GM13976 (cell line): ENCODE measurements at regions of chr17 and their contacts with region 1.

Region 1: DNA sequence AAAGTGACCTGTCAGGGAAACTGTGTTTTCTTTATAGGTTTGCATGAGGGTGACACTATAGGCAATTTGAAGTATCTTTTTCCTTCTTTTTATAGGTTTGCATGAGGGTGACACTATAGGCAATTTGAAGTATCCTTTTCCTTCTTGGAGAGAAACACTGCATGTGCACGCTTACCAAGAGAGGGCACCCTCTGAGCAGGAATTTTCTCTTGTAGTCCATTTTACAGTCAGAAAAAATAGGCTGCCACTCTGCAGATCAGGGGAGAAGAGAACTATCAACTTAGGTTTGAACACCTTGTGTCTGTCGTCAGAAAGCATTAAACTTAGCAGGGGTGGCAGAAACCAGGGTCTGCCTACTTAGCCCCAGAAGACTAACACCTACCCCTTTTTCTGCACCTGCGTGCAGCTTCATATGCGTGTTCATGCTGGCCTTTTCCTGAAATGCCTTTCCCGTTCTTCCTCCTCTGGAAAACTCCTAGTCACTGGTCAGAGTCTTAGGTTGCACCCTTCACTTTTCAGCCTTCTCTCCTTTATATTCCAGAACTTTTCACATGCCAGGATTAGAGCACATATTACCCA is 16.4 kb upstream of the SMIM36 start:
- DNase-seq: peak; percentile 29
- CTCF ChIP-seq: peak; percentile 41

Region 2: DNA sequence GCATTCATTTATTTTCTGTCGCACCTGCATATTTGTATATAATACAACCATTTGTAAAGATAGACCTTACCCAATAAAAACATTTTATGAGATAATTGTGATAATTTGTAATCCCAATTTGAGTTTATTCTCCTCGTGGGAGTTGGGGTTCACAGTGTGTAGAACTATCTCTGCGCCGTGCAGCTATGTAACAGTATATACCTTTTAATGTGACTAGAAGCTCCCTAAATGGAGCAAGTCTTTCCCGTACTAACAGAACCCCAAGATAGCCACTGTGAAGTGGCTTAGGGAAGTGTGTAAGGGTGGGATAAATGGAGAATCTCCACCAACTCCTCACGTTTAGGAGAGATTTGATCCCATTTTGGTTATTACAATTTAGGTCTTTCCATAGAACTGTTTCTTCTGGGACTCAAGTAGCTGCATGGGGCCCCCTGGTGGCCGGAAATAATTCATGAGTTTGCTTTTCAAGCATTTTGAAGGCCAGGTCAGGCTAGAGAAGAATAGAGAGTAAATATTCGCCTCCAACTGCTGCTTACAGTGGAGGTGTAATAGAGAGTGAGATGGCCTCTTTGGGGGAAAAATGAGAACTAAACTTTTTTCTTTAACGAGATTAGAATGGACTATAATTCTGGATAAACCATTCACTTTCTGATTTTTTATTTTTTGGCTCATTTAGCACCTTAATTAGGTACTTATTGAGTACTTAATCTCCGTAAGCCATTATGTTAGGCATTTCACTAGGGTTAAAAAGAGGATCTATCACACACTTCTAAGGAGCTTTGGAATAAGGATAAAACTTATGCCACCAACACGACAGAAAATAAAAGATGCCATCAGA is 190.5 kb after region 1 on chr17:
- in situ Hi-C with region 1: loop called (anchors 10 kb)
- DNase-seq: peak; percentile 23
- CTCF ChIP-seq: peak; percentile 67

Region 3: GRCh38 chr17:55743103-55743679 is 215.6 kb after region 1 on chr17:
- in situ Hi-C with region 1: loop called (anchors 10 kb)
- DNase-seq: no peak
- CTCF ChIP-seq: no peak

Region 4: DNA sequence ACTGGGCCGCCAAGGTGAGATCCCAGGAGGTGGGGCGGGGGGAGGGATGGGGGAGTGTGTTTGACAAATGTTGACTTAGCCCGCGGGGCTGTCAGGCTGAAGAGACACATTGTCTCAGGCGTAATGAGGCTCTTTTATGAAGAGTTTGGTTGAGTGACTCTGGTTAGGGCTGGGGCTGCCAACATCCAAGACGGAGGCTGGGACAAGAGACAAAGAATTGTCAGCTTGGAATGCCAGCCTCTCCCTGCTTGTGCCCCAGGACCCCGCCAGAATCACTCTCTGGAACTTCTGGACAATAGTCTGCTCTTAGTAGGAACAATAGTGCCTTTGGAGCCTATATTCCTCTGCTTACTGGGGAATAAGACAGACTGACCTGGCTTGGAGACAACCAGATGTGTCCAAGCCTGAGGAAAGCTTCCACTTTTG is 247.2 kb after region 1 on chr17:
- in situ Hi-C with region 1: no loop called
- DNase-seq: no peak
- CTCF ChIP-seq: no peak

Region 5: GRCh38 chr17:55962951-55963401 is 435.3 kb after region 1 on chr17:
- in situ Hi-C with region 1: no loop called
- DNase-seq: no peak
- CTCF ChIP-seq: no peak